ENCODE measurements at regions of chr2 and their contacts with region 1.

Region 1: GRCh38 chr2:177021706-177022343 is 190.8 kb upstream of the HNRNPA3 start:
- DNase-seq: no peak
- ATAC-seq: no peak
- H3K4me3 ChIP-seq: no peak overlapping the region
- H3K27ac ChIP-seq: no peak overlapping the region
- H3K4me1 ChIP-seq: no peaks in the 10 kb centered on the region
- H3K27me3 ChIP-seq: no peaks in the 10 kb centered on the region
- CTCF ChIP-seq: no peak
- EP300 ChIP-seq: no peak
- POLR2A ChIP-seq: no peak
- RAD21 ChIP-seq: no peak

Region 2: GRCh38 chr2:177038787-177039484 is 17.1 kb after region 1 on chr2:
- CTCF ChIA-PET with region 1: interaction called, 3 read pairs
- POLR2A ChIA-PET with region 1: no interaction called
- RAD21 ChIA-PET with region 1: no interaction called
- SMC1A ChIA-PET with region 1: interaction called, 15 read pairs
- in situ Hi-C with region 1: no loop called
- intact Hi-C with region 1: no loop called
- DNase-seq: no peak
- ATAC-seq: no peak
- H3K4me3 ChIP-seq: no peak overlapping the region
- H3K27ac ChIP-seq: no peak overlapping the region
- H3K4me1 ChIP-seq: no peaks in the 10 kb centered on the region
- H3K27me3 ChIP-seq: no peaks in the 10 kb centered on the region; a peak in 1 of 4 replicates
- CTCF ChIP-seq: no peak
- EP300 ChIP-seq: no peak
- POLR2A ChIP-seq: no peak
- RAD21 ChIP-seq: no peak